ENCODE measurements at regions of chr14 and their contacts with region 1.

Region 1: GRCh38 chr14:67514650-67515385 is 18.3 kb upstream of the PLEKHH1 start:
- DNase-seq: peak; percentile 46 to 59 (median 55)
- H3K4me3 ChIP-seq: peak overlapping the region; percentile 53 to 56
- H3K4me3 Mint-ChIP-seq: peak overlapping the region; percentile 90 to 97 (median 94)
- H3K27ac ChIP-seq: peak overlapping the region; percentile 68
- H3K27ac Mint-ChIP-seq: peak overlapping the region; percentile 88 to 96 (median 92)
- H3K4me1 ChIP-seq: peaks cover 25% of the 10 kb centered on the region
- H3K4me1 Mint-ChIP-seq: peaks cover 13 to 36% (median 23%) of the 10 kb centered on the region in 4 donors
- H3K27me3 ChIP-seq: no peaks in the 10 kb centered on the region
- H3K27me3 Mint-ChIP-seq: no peaks in the 10 kb centered on the region

Region 2: DNA sequence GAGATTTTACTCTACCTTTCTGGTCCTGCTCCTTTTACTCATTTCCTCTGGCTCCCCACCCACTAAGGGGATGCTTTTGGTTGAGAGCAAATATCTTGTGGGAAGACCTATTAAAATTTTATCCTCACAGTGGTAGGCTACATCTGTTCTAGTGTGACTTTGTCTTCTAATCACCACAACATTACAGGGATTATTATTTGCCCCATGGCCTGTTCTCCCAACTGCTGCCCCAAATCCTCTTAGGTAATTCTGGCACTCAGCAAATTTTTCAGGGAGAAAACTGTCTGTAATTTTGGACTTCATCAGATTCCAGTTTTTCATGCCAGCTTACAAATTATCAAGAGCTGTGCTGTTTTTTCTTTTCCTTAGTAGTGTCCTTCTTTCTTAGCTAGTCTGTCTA is 834.6 kb before region 1 on chr14:
- CTCF ChIA-PET with region 1: no interaction called
- POLR2A ChIA-PET with region 1: no interaction called
- intact Hi-C with region 1: no loop called
- DNase-seq: no peak
- H3K4me3 ChIP-seq: no peak overlapping the region
- H3K4me3 Mint-ChIP-seq: no peak overlapping the region
- H3K27ac ChIP-seq: no peak overlapping the region
- H3K27ac Mint-ChIP-seq: no peak overlapping the region
- H3K4me1 ChIP-seq: no peaks in the 10 kb centered on the region
- H3K4me1 Mint-ChIP-seq: peaks cover 0 to 2% (median under 1%) of the 10 kb centered on the region in 4 donors
- H3K27me3 ChIP-seq: no peaks in the 10 kb centered on the region
- H3K27me3 Mint-ChIP-seq: no peaks in the 10 kb centered on the region

Region 3: DNA sequence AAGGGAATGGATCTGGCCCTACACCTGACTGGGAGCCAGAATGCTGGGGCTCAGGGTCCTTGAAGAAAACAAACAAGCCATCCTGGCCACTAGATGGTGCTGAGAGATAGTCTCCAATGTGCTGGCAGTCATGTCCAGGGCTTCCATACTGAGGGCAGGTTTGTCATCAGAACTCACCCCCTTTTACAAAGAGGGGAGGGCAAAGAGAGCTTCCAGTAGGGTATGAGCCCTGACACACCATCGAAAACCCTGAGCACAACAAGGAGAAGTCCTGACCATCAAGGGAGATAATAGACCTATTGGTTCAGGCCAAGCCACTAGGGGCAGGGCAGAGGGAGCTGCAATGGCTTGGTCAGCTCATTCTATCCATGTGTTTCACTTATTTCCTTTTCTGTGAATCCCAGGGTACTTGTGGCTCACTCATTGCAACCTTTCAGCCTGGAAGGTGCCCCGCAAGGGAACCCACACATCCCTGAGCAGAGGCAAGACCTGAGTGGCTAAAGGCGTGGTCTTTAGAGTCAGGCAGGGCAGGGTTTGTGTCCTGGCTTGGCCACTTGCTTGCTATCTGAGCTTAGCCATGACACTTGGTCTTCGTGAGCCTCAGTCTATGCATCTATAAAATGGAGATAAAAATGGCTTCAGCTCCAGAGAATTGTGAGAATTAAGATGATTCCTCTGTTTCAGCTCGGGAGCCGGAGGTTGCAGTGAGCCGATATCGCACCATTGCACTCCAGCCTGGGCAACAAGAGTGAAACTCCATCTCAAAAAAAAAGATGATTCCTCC is 12.1 kb after region 1 on chr14:
- CTCF ChIA-PET with region 1: interaction called, 18 read pairs
- POLR2A ChIA-PET with region 1: interaction called, 3 read pairs
- intact Hi-C with region 1: no loop called
- DNase-seq: peak; percentile 30 to 47 (median 31)
- H3K4me3 ChIP-seq: no peak overlapping the region
- H3K4me3 Mint-ChIP-seq: no peak overlapping the region
- H3K27ac ChIP-seq: no peak overlapping the region
- H3K27ac Mint-ChIP-seq: no peak overlapping the region
- H3K4me1 ChIP-seq: no peaks in the 10 kb centered on the region
- H3K4me1 Mint-ChIP-seq: peaks cover 2 to 9% (median 5%) of the 10 kb centered on the region in 4 donors
- H3K27me3 ChIP-seq: peaks cover 15% of the 10 kb centered on the region
- H3K27me3 Mint-ChIP-seq: peaks cover 13 to 44% of the 10 kb centered on the region in 2 donors

Measured in CD4-positive, alpha-beta memory T cell (primary cell).